ENCODE measurements at regions of chr18 and their contacts with region 1.

Region 1: DNA sequence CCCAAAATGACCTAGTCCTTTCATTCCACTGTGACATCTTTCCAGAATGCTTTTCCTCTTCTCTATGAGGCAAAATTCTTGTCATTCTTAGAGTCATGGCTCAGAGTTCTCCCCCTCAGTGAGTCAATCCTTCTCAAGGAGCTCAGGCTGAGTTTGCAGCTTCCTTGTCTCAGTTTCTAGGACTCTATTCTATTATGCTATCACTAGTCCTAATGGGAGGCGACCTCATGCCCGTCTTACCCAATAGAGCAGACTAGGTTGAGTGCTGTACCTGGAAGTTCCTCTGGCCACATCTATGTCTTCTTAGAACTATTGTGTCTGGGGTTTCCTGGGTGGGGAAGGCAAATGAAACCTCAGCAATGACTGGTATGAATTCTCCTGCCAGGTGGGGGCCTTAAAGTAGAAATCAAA is 51.5 kb downstream of the HAUS1 start:
- DNase-seq: no peak
- ATAC-seq: no peak
- H3K4me3 ChIP-seq: no peak overlapping the region
- H3K27ac ChIP-seq: peak overlapping the region in 1 of 4 donors; percentile 97
- H3K4me1 ChIP-seq: peaks cover 26 to 27% of the 10 kb centered on the region in 2 donors
- H3K27me3 ChIP-seq: no peaks in the 10 kb centered on the region
- CTCF ChIP-seq: no peak
- POLR2A ChIP-seq: no peak

Region 2: DNA sequence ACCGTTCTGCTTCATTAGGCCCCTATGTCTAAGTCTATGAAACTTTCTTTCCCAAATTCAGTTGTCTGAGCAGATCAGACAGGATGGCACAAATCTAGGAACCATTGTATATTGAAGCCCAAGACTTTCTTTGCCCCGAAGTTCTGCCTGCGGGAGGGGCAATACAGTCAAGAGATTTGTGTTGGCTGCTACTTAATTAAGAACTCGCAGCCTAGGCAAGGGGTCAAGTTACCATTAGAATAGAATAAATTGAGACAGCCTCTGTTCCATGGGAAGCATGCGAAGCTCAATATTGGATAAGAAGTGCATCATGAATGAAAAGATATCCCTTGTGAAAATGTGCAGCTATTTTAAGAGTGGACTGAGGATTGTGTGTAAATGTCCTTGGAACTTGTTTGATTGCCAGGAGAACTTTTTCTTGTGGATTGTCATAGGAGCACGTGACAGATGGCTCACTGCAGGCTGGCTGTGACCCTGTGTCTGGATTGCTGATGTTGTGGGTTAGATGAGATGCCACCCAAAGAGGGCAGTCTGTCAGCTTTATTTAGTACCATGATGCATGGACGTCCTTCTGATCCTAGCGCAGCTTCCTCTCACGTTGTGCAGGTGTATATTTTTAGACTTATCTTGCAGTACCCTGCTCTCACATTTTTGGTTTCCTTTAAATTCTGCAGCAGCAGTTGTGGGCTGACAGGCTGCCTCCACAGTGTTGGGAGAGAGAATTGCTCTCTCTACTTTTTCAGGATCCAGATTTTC is 20.5 kb before region 1 on chr18:
- in situ Hi-C with region 1: no loop called
- intact Hi-C with region 1: loop called (anchors 2 kb)
- DNase-seq: peak; percentile 71 to 86
- ATAC-seq: peak; percentile 99 to 100
- H3K4me3 ChIP-seq: no peak overlapping the region
- H3K27ac ChIP-seq: peak overlapping the region; percentile 80 to 85 (median 82)
- H3K4me1 ChIP-seq: peaks cover 9 to 13% of the 10 kb centered on the region in 2 donors
- H3K27me3 ChIP-seq: no peaks in the 10 kb centered on the region
- CTCF ChIP-seq: no peak
- POLR2A ChIP-seq: no peak

Region 3: GRCh38 chr18:46264235-46264893 is 108.7 kb after region 1 on chr18:
- in situ Hi-C with region 1: no loop called
- intact Hi-C with region 1: loop called (anchors 5 kb)
- DNase-seq: no peak
- ATAC-seq: no peak
- H3K4me3 ChIP-seq: no peak overlapping the region
- H3K27ac ChIP-seq: peak overlapping the region in 3 of 4 donors; percentile 12 to 31 (median 15)
- H3K4me1 ChIP-seq: peaks cover 67 to 78% of the 10 kb centered on the region in 2 donors
- H3K27me3 ChIP-seq: no peaks in the 10 kb centered on the region
- CTCF ChIP-seq: no peak
- POLR2A ChIP-seq: no peak

Region 4: DNA sequence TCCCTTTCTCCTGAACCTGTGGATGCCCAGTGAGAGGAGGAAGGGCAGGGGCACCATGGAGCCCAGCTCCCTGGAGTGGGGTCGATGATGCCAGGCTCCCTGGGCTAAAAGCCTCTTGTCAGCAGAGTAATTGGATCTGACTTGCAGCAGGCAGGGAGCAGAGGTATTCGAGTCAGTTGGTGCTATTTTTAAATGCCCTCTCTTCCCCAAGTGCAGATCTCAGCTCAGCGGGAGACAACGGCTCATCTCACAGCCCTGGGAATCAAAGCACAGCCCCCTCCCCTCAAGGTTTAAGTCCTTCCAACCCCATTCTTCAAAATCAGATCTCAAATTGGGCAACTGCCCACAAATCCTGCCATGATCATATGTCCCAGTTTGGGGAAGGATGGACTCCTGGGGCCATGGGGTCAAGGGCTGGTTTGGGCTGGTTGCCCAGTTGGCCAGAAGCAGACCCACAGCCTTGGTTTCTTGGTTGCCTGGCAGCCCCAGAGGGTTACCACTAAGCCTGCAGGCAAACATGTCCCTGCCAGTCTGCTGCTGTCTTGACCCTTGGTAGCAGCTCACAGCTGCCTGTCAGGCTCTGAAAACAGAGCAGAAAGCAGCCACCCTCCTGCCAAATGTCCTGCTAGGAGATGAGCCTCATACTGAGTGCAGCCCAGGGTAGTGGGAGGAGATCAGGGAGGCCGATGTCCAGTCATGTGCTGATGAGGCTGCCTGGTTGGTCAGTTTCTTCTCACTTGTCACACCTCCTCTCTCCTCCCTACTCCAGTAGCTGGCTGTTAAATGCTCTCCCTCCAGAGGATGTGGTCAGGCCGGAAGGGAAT is 256.4 kb after region 1 on chr18:
- in situ Hi-C with region 1: no loop called
- intact Hi-C with region 1: loop called (anchors 2 kb)
- DNase-seq: peak; percentile 74 to 94
- ATAC-seq: peak; percentile 82 to 84
- H3K4me3 ChIP-seq: peak overlapping the region in 1 of 4 donors; percentile 23
- H3K27ac ChIP-seq: peak overlapping the region; percentile 91 to 98 (median 96)
- H3K4me1 ChIP-seq: peaks cover 76 to 78% of the 10 kb centered on the region in 2 donors
- H3K27me3 ChIP-seq: no peaks in the 10 kb centered on the region
- CTCF ChIP-seq: no peak
- POLR2A ChIP-seq: peak in 1 of 2 donors; percentile 72

Measured in gastrocnemius medialis (tissue), 4 donors.